Prostate gland (tissue), 2 donors: ENCODE measurements at regions of chr5 and their contacts with region 1.

Region 1: DNA sequence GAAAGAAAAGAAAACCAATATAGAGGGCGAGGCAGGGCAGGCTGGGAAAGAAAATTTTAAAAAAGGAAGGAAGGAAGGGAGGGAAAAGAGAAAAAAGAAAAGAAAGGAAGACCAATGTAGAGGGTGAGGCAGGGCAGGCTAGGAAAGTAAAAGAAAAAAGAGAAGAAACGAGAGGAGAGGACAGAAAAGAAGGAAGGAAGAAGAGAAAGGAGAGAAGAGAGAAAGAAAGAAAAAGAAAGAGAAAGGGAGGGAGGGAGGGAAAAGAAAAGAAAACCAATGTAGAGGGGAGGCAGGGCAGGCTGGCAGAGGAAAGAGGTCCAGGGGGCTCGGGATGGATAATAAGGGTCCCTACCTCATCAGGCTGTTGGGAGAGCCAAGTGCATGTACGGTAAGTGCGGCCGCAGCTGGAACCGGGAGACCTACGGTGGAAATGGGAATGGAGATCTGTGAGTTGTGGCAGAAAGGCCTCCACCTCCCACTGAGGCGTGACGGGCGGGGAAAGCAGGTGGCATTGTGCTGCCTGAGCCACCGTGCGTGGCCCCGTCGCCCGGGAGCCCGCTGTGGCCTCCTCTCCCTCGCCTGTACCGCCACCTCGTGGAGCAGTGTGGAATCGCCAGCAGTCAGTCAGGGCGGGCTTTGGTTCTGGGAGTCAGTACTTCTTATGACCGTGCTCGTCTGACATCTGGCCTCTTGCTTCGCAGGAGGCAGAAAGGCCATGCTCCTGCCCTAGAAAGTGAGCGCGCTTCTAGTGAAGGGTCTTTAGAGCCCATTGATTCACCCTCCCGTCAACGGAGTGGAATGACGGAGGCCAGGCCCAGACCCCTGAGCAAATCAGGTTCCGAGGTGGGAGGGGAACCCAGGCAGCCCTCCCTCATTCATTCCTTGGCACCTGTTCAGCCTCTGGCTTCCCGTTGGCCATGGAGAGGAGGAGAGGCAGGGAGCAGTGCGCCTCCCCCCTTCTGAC is 10.4 kb upstream of the NHP2 start:
- DNase-seq: peak; percentile 66
- H3K4me3 ChIP-seq: no peak overlapping the region
- H3K27ac ChIP-seq: no peak overlapping the region
- H3K4me1 ChIP-seq: no peaks in the 10 kb centered on the region
- H3K27me3 ChIP-seq: no peaks in the 10 kb centered on the region
- CTCF ChIP-seq: peak; percentile 87 to 99 (median 93)
- POLR2A ChIP-seq: no peak

Region 2: GRCh38 chr5:178075840-178076548 is 88.1 kb before region 1 on chr5:
- intact Hi-C with region 1: loop called (anchors 2 kb)
- DNase-seq: peak; percentile 63
- H3K4me3 ChIP-seq: no peak overlapping the region
- H3K27ac ChIP-seq: no peak overlapping the region
- H3K4me1 ChIP-seq: no peaks in the 10 kb centered on the region
- H3K27me3 ChIP-seq: no peaks in the 10 kb centered on the region
- CTCF ChIP-seq: peak; percentile 67 to 95 (median 82)
- POLR2A ChIP-seq: no peak